MCF 10A (cell line): ENCODE measurements at regions of chr7 and their contacts with region 1.

Region 1: DNA sequence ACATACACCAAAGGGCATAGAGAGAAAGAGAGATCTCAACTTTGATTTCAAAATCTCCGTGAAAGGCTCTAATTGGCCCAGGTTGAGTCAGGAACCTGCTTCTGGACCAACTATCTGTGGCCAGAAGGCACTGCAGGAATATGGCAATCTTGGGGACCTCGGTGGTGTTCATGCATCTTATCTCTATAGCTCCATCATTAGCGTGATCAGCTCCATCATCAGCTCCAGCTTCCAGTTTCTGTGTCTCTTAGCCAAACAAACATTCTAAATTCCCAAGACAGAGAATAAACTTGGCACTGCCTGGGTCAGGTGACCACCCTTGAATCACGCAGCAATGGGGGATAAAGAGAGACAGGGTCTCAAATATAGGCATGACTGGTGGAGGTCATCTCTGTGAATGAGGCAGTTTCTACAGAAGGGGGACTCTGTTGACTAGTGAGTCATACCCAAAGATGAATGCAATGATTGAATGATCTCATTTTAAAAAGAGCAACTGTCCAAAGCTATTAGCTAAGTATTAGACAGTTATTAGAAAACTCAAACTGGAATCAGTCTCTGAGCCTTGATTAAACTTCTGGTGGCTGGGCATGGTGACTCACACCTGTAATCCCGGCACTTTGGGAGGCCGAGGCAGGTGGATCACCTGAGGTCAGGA is 5.4 kb upstream of the NRF1 start:
- DNase-seq: no peak
- H3K4me3 Mint-ChIP-seq: no peak overlapping the region
- H3K27ac Mint-ChIP-seq: no peak overlapping the region
- H3K4me1 Mint-ChIP-seq: peaks cover 4% of the 10 kb centered on the region
- H3K27me3 Mint-ChIP-seq: no peaks in the 10 kb centered on the region
- CTCF ChIP-seq: no peak

Region 2: DNA sequence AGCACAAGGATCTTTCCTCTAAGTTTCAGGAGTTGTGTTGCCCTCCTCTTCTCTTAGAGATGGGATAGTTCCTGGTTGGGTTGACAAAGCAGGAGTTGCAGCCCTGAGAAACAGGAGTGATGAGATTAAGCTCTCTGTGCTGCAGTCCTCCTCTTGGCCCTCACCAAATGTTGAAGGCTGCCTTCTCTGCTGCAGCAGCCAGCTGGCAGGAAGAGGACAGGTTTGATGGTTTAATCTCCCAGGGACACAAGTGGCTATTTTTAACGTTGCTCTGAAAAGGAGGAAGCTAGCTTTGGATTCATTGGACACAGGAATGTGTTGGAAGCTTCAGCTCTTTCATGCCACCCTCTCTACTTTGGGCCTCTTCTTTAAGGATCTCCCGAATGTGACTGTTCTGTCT is 162.5 kb before region 1 on chr7:
- CTCF ChIA-PET with region 1: no interaction called
- POLR2A ChIA-PET with region 1: no interaction called
- intact Hi-C with region 1: no loop called
- DNase-seq: no peak
- H3K4me3 Mint-ChIP-seq: no peak overlapping the region
- H3K27ac Mint-ChIP-seq: no peak overlapping the region
- H3K4me1 Mint-ChIP-seq: peaks cover 40% of the 10 kb centered on the region
- H3K27me3 Mint-ChIP-seq: no peaks in the 10 kb centered on the region
- CTCF ChIP-seq: no peak

Region 3: DNA sequence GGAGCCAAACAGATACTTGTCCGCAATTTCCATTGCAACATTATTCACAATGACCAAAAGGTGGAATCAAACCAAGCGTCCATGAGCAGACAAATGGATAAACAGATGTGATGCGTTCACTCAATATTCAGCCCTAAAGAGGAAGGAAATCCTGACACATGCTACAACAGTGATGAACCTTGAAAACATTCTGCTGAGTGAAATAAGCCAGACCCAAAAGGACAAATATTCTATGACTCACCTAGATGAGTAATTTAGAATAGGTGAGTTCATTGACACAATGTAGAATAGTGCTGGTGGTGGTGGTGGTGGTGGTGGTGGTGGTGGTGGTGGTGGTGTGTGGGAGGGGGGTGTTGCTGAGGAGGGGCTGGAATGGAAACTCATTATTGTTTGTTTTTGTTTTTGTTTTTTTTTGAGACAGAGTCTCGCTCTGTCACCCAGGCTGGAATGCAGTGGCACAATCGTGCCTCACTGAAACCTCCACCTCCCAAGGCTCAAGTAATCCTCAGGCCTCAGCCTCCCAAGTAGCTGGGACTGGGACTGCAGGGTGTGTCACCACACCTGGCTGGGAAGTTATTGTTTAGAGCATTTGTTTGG is 75.2 kb before region 1 on chr7:
- CTCF ChIA-PET with region 1: no interaction called
- POLR2A ChIA-PET with region 1: no interaction called
- intact Hi-C with region 1: no loop called
- DNase-seq: peak; percentile 82
- H3K4me3 Mint-ChIP-seq: peak overlapping the region; percentile 10
- H3K27ac Mint-ChIP-seq: peak overlapping the region; percentile 82
- H3K4me1 Mint-ChIP-seq: peaks cover 5% of the 10 kb centered on the region
- H3K27me3 Mint-ChIP-seq: no peaks in the 10 kb centered on the region
- CTCF ChIP-seq: no peak

Region 4: GRCh38 chr7:129591868-129592267 is 14.2 kb before region 1 on chr7:
- CTCF ChIA-PET with region 1: no interaction called
- POLR2A ChIA-PET with region 1: interaction called, 14 read pairs
- intact Hi-C with region 1: no loop called
- DNase-seq: no peak
- H3K4me3 Mint-ChIP-seq: no peak overlapping the region
- H3K27ac Mint-ChIP-seq: no peak overlapping the region
- H3K4me1 Mint-ChIP-seq: no peaks in the 10 kb centered on the region
- H3K27me3 Mint-ChIP-seq: no peaks in the 10 kb centered on the region
- CTCF ChIP-seq: no peak